Mammary epithelial cell (primary cell): ENCODE measurements at regions of chr2 and their contacts with region 1.

Region 1: DNA sequence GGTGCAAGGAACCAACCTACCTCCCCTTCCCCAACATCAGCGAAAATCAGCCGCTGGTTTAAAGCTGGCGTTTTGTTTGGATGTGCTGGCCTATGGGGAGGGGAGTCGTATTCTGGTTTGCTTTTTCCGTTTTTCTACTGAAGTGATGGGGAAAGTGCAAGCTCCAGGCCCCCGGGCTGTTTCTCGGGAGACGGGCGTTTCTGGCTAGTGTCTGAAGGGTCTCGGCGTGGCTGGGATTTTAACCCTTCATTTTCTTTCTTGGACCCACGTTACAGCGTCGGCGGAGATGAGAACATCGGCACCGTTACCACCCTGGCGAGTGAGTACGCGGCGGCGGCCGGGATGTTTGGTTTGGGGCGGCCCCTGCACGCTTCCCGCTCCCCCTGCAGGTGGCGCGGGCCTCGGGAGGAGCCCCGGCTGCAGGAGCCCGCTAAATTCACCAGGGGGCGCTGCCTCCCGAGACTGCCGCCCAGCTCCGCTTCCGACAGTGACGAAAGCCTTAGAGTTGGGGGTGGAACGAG is 70.7 kb downstream of the PLB1 start:
- DNase-seq: peak; percentile 70
- H3K4me3 ChIP-seq: peak overlapping the region; percentile 46 to 62 (median 55)
- H3K27ac ChIP-seq: peak overlapping the region; percentile 63
- H3K4me1 ChIP-seq: peaks cover 33% of the 10 kb centered on the region
- H3K27me3 ChIP-seq: no peaks in the 10 kb centered on the region
- CTCF ChIP-seq: peak; percentile 96 to 100

Region 2: DNA sequence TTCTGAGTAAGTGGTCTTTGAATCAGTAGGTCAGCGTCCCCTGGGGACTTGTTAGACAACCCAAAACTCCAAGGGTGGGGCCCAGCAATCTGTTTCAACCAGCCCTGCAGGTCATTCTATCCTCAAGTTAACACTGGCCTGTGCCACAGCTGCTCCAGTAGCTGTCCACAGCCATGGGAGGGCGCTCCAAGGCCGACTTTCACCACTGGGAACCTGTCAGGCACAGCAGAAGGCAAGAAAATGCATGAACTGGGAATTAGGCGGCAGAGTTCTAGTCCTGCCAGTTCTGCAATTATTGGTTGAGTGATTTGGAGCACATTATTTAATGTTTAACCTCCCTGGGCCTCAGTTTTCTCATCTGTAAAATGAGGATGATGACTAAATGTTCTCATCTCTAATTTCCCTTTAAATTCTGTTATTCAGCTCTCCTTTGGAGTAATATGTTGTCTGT is 812.4 kb before region 1 on chr2:
- CTCF ChIA-PET with region 1: no interaction called
- dilution Hi-C with region 1: no loop called
- in situ Hi-C with region 1: no loop called
- intact Hi-C with region 1: loop called (anchors 1 kb)
- DNase-seq: peak; percentile 76
- H3K4me3 ChIP-seq: no peak overlapping the region
- H3K27ac ChIP-seq: peak overlapping the region; percentile 91
- H3K4me1 ChIP-seq: peaks cover 21% of the 10 kb centered on the region
- H3K27me3 ChIP-seq: no peaks in the 10 kb centered on the region
- CTCF ChIP-seq: peak; percentile 97 to 99

Region 3: GRCh38 chr2:28583899-28584553 is 17.4 kb after region 1 on chr2:
- CTCF ChIA-PET with region 1: no interaction called
- dilution Hi-C with region 1: no loop called
- in situ Hi-C with region 1: no loop called
- intact Hi-C with region 1: loop called (anchors 1 kb)
- DNase-seq: peak; percentile 97
- H3K4me3 ChIP-seq: peak overlapping the region in 2 of 3 experiments; percentile 27 to 32
- H3K27ac ChIP-seq: peak overlapping the region; percentile 98
- H3K4me1 ChIP-seq: peaks cover 32% of the 10 kb centered on the region
- H3K27me3 ChIP-seq: no peaks in the 10 kb centered on the region
- CTCF ChIP-seq: no peak

Region 4: GRCh38 chr2:28594289-28595108 is 27.9 kb after region 1 on chr2:
- CTCF ChIA-PET with region 1: interaction called, 15 read pairs
- dilution Hi-C with region 1: no loop called
- in situ Hi-C with region 1: no loop called
- intact Hi-C with region 1: loop called (anchors 1 kb)
- DNase-seq: peak; percentile 94
- H3K4me3 ChIP-seq: peak overlapping the region in 1 of 3 experiments; percentile 2
- H3K27ac ChIP-seq: peak overlapping the region; percentile 63
- H3K4me1 ChIP-seq: peaks cover 38% of the 10 kb centered on the region
- H3K27me3 ChIP-seq: no peaks in the 10 kb centered on the region
- CTCF ChIP-seq: peak; percentile 79 to 83

Region 5: GRCh38 chr2:28610583-28611201 is 44.1 kb after region 1 on chr2:
- CTCF ChIA-PET with region 1: no interaction called
- dilution Hi-C with region 1: loop called (anchors 5 kb)
- in situ Hi-C with region 1: no loop called
- intact Hi-C with region 1: loop called (anchors 1 kb)
- DNase-seq: peak; percentile 98
- H3K4me3 ChIP-seq: no peak overlapping the region
- H3K27ac ChIP-seq: peak overlapping the region; percentile 71
- H3K4me1 ChIP-seq: peaks cover 52% of the 10 kb centered on the region
- H3K27me3 ChIP-seq: no peaks in the 10 kb centered on the region
- CTCF ChIP-seq: no peak

Region 6: GRCh38 chr2:28801726-28802487 is 235.3 kb after region 1 on chr2:
- CTCF ChIA-PET with region 1: no interaction called
- dilution Hi-C with region 1: no loop called
- in situ Hi-C with region 1: no loop called
- intact Hi-C with region 1: loop called (anchors 5 kb)
- DNase-seq: peak; percentile 60
- H3K4me3 ChIP-seq: no peak overlapping the region
- H3K27ac ChIP-seq: peak overlapping the region; percentile 36
- H3K4me1 ChIP-seq: peaks cover 14% of the 10 kb centered on the region
- H3K27me3 ChIP-seq: no peaks in the 10 kb centered on the region
- CTCF ChIP-seq: no peak

Region 7: GRCh38 chr2:28842042-28842441 is 275.5 kb after region 1 on chr2:
- CTCF ChIA-PET with region 1: no interaction called
- dilution Hi-C with region 1: no loop called
- in situ Hi-C with region 1: no loop called
- intact Hi-C with region 1: no loop called
- DNase-seq: no peak
- H3K4me3 ChIP-seq: no peak overlapping the region
- H3K27ac ChIP-seq: no peak overlapping the region
- H3K4me1 ChIP-seq: no peaks in the 10 kb centered on the region
- H3K27me3 ChIP-seq: no peaks in the 10 kb centered on the region
- CTCF ChIP-seq: no peak

Region 8: GRCh38 chr2:28894470-28895177 is 328.0 kb after region 1 on chr2 and contains the start of gene WDR43:
- CTCF ChIA-PET with region 1: no interaction called
- dilution Hi-C with region 1: no loop called
- in situ Hi-C with region 1: no loop called
- intact Hi-C with region 1: loop called (anchors 1 kb)
- DNase-seq: peak; percentile 98
- H3K4me3 ChIP-seq: peak within 1 kb of the TSS; percentile 74 to 99 (median 98)
- H3K27ac ChIP-seq: peak within 1 kb of the TSS; percentile 76
- H3K4me1 ChIP-seq: peaks cover 21% of the 10 kb centered on the region
- H3K27me3 ChIP-seq: no peaks in the 10 kb centered on the region
- CTCF ChIP-seq: no peak
- total RNA-seq, gene WDR43: 106 to 122 TPM